ENCODE measurements at regions of chr11 and their contacts with region 1.

Region 1: GRCh38 chr11:8870411-8871170 is 40.4 kb upstream of the AKIP1 start:
- DNase-seq: peak; percentile 75
- ATAC-seq: peak; percentile 79
- H3K4me3 ChIP-seq: peak overlapping the region; percentile 51
- H3K27ac ChIP-seq: peak overlapping the region; percentile 78
- H3K4me1 ChIP-seq: peaks cover 12% of the 10 kb centered on the region
- H3K27me3 ChIP-seq: no peaks in the 10 kb centered on the region
- CTCF ChIP-seq: no peak
- POLR2A ChIP-seq: no peak
- RAD21 ChIP-seq: no peak

Region 2: GRCh38 chr11:8688414-8689362 is 181.9 kb before region 1 on chr11:
- CTCF ChIA-PET with region 1: no interaction called
- POLR2A ChIA-PET with region 1: no interaction called
- dilution Hi-C with region 1: no loop called
- in situ Hi-C with region 1: no loop called
- intact Hi-C with region 1: loop called (anchors 1 kb)
- DNase-seq: peak; percentile 96
- ATAC-seq: peak; percentile 89
- H3K4me3 ChIP-seq: peak overlapping the region; percentile 52
- H3K27ac ChIP-seq: peak overlapping the region; percentile 77
- H3K4me1 ChIP-seq: peaks cover 7% of the 10 kb centered on the region
- H3K27me3 ChIP-seq: no peaks in the 10 kb centered on the region
- CTCF ChIP-seq: peak; percentile 20; the same call in 1 of the 2 replicates
- POLR2A ChIP-seq: peak; percentile 80
- RAD21 ChIP-seq: peak; percentile 40

Region 3: DNA sequence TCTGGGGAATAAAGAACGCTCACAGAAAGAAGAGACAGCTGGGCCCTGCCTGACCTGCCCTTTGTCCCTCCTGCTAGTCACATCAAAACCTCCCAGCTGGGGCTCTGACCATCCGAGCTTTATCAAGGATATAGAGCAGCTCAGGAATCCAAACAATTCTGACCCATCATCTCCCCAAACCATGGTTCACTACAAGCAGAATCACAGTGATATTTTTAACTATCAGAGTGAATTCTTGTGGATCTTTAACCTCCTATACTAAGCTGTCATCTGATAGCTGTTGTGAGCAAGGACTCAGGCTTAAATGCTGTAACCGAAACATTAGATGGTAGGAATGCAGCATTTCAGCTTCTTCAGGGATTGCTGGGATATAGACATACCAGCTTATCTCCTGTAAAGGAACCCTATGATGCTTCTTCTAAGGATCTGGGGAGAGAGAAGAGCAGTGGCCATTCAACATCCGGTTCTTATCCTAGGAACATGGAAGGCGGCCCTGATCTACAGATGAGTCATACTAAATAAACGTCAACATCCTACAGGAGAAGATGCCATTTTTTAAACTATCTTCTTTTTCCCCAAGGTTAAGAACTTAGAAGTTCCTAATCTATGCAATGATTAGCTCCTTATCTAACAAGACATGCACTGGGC is 44.3 kb before region 1 on chr11:
- CTCF ChIA-PET with region 1: no interaction called
- POLR2A ChIA-PET with region 1: interaction called, 4 read pairs
- dilution Hi-C with region 1: no loop called
- in situ Hi-C with region 1: no loop called
- intact Hi-C with region 1: loop called (anchors 1 kb)
- DNase-seq: peak; percentile 95
- ATAC-seq: peak; percentile 90
- H3K4me3 ChIP-seq: no peak overlapping the region
- H3K27ac ChIP-seq: peak overlapping the region; percentile 91
- H3K4me1 ChIP-seq: peaks cover 16% of the 10 kb centered on the region
- H3K27me3 ChIP-seq: no peaks in the 10 kb centered on the region
- CTCF ChIP-seq: no peak
- POLR2A ChIP-seq: no peak
- RAD21 ChIP-seq: no peak